GM18951 (cell line): ENCODE measurements at regions of chr2 and their contacts with region 1.

Region 1: DNA sequence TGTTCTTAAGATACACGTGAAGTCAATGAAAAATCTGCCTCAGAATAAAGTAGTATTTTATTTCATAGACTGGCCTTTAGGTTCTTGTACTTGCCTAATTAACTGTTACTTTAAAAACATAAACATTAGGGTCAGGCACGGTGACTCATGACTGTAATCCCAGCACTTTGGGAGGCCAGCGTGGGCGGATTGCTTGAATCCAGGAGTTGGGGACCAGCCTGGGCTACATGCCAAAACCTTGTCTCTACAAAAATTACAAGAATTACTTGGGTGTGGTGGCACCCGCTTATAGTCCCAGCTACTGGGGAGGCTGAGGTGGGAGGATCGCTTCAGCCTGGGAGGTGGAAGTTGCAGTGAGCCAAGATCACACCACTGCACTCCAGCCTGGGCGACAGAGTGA is 16.0 kb upstream of the SNORC start:
- POLR2A ChIP-seq: no peak

Region 2: GRCh38 chr2:233251306-233252116 is 397.4 kb after region 1 on chr2 and contains the start of gene ATG16L1:
- in situ Hi-C with region 1: loop called (anchors 10 kb)
- POLR2A ChIP-seq: peak; percentile 92